ENCODE measurements at regions of chr3 and their contacts with region 1.

Region 1: DNA sequence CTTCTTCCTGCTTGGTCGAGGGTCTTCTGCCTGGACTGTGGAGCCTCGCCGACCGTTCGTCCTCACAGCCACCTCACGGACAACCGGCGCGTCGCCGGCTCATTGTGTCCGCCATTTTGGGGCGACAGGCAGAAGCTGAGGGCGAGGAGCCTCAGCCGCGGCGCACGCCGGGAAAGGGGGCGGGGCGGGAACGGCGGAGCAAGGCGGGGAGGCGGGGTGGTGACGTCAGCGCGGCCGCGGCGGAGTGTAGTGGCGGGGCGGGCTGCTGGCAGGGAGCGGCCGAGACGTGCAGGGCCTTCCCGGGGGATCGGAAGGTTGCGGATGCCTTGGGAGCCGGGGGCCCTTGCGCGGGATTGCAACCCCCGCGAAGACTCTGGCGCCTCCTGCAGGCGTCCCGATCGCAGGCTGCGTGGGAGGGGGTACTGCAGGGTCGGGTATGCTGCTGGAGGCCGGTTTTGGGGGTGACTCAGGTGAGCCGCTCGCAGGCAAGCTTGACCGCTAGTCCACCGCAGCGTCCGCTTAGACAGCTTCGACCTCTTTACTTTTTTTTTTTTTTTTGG is at the start of gene WDR82:
- DNase-seq: peak; percentile 100
- ATAC-seq: peak; percentile 85
- H3K4me3 Mint-ChIP-seq: peak within 1 kb of the TSS; percentile 99
- H3K27ac Mint-ChIP-seq: peak within 1 kb of the TSS; percentile 98
- H3K4me1 Mint-ChIP-seq: peaks cover 55% of the 10 kb centered on the region
- H3K27me3 Mint-ChIP-seq: no peaks in the 10 kb centered on the region
- CTCF ChIP-seq: no peak
- total RNA-seq, gene WDR82: 84.1 and 86.4 TPM in 2 replicates

Region 2: DNA sequence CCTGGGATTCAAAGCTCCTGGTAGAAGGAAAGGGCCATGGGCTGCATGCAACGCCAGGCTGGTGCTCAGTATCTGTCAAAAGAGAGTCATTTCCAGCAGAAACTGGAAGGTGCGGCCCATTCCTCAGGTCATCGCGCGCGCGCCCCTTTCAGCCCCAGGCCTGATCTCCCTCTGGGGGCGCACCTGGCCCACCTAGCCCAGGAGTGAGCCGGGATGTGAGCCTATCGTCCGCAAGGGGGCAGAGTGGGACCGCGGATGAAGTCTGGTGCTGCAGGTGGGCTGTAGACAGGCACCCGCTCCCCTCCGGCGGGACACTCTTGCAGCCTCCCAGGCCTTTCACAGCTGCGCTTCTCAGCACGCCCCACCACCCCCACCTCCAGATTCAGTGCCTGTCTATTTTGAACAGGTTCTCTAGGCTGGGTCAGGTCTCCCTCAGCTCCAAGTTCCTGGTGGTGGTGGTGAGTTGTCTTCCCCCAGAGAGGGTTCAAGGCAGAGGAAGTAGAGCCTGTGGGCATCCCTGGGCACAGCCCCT is 277.1 kb before region 1 on chr3:
- CTCF ChIA-PET with region 1: no interaction called
- POLR2A ChIA-PET with region 1: no interaction called
- intact Hi-C with region 1: loop called (anchors 5 kb)
- DNase-seq: peak; percentile 85
- ATAC-seq: peak; percentile 99
- H3K4me3 Mint-ChIP-seq: no peak overlapping the region
- H3K27ac Mint-ChIP-seq: no peak overlapping the region
- H3K4me1 Mint-ChIP-seq: peaks cover 5% of the 10 kb centered on the region
- H3K27me3 Mint-ChIP-seq: peaks cover 2% of the 10 kb centered on the region
- CTCF ChIP-seq: peak; percentile 56

Region 3: GRCh38 chr3:52225452-52226228 is 53.0 kb before region 1 on chr3 and contains the start of gene TLR9:
- CTCF ChIA-PET with region 1: interaction called, 48 read pairs
- POLR2A ChIA-PET with region 1: interaction called, 81 read pairs
- intact Hi-C with region 1: loop called (anchors 1 kb)
- DNase-seq: peak; percentile 77
- ATAC-seq: peak; percentile 87
- H3K4me3 Mint-ChIP-seq: peak within 1 kb of the TSS; percentile 90
- H3K27ac Mint-ChIP-seq: peak within 1 kb of the TSS; percentile 97
- H3K4me1 Mint-ChIP-seq: peaks cover 77% of the 10 kb centered on the region
- H3K27me3 Mint-ChIP-seq: no peaks in the 10 kb centered on the region
- CTCF ChIP-seq: no peak
- total RNA-seq, gene TLR9: 10.4 and 11.4 TPM in 2 replicates

Region 4: GRCh38 chr3:52238761-52239701 is 39.6 kb before region 1 on chr3 and contains the start of gene TWF2:
- CTCF ChIA-PET with region 1: interaction called, 10 read pairs
- POLR2A ChIA-PET with region 1: interaction called, 111 read pairs
- intact Hi-C with region 1: loop called (anchors 1 kb)
- DNase-seq: peak; percentile 94
- ATAC-seq: peak; percentile 86
- H3K4me3 Mint-ChIP-seq: peak within 1 kb of the TSS; percentile 96
- H3K27ac Mint-ChIP-seq: peak within 1 kb of the TSS; percentile 93
- H3K4me1 Mint-ChIP-seq: peaks cover 72% of the 10 kb centered on the region
- H3K27me3 Mint-ChIP-seq: no peaks in the 10 kb centered on the region
- CTCF ChIP-seq: no peak
- total RNA-seq, gene TWF2: 74.1 and 76.7 TPM in 2 replicates

Region 5: GRCh38 chr3:52253314-52254304 is 25.0 kb before region 1 on chr3:
- CTCF ChIA-PET with region 1: interaction called, 16 read pairs
- POLR2A ChIA-PET with region 1: interaction called, 88 read pairs
- intact Hi-C with region 1: loop called (anchors 1 kb)
- DNase-seq: peak; percentile 58
- ATAC-seq: peak; percentile 96
- H3K4me3 Mint-ChIP-seq: peak overlapping the region; percentile 76
- H3K27ac Mint-ChIP-seq: peak overlapping the region; percentile 97
- H3K4me1 Mint-ChIP-seq: peaks cover 42% of the 10 kb centered on the region
- H3K27me3 Mint-ChIP-seq: no peaks in the 10 kb centered on the region
- CTCF ChIP-seq: no peak

Region 6: DNA sequence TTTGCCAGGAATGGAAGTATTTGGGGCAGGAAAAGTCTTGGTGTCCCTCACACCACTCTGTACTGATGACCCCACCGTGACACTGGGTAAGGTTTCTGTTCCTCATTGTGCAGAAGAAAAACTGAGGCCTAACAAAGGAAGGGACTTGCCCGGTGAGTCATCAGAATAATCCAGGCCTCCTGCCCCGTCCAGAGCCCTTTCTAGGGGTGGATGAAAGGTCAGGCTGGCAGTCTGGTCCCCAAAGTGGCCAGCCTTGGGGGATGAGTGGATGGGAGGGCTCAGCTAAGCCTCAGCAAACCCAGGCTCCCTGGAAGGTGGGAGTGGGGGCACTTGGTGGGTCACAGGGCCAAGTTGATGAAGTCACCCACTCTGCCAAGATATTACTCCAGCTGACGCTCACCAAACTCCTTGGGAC is 35.2 kb after region 1 on chr3:
- CTCF ChIA-PET with region 1: no interaction called
- POLR2A ChIA-PET with region 1: interaction called, 10 read pairs
- intact Hi-C with region 1: loop called (anchors 1 kb)
- DNase-seq: peak; percentile 55
- ATAC-seq: peak; percentile 77
- H3K4me3 Mint-ChIP-seq: peak overlapping the region; percentile 55
- H3K27ac Mint-ChIP-seq: peak overlapping the region; percentile 87
- H3K4me1 Mint-ChIP-seq: peaks cover 78% of the 10 kb centered on the region
- H3K27me3 Mint-ChIP-seq: no peaks in the 10 kb centered on the region
- CTCF ChIP-seq: no peak

Region 7: GRCh38 chr3:52696830-52697621 is 418.4 kb after region 1 on chr3:
- CTCF ChIA-PET with region 1: no interaction called
- POLR2A ChIA-PET with region 1: no interaction called
- intact Hi-C with region 1: no loop called
- DNase-seq: no peak
- ATAC-seq: no peak
- H3K4me3 Mint-ChIP-seq: no peak overlapping the region
- H3K27ac Mint-ChIP-seq: peak overlapping the region; percentile 32
- H3K4me1 Mint-ChIP-seq: peaks cover 11% of the 10 kb centered on the region
- H3K27me3 Mint-ChIP-seq: no peaks in the 10 kb centered on the region
- CTCF ChIP-seq: no peak

Measured in activated B cell treated with CpG ODN at 0.5 μM for 24 hours (primary cell).